ENCODE measurements at regions of chr3 and their contacts with region 1.

Region 1: GRCh38 chr3:5583920-5584319 is 396.4 kb downstream of the EDEM1 start:
- DNase-seq: no peak
- H3K4me3 ChIP-seq: no peak overlapping the region
- H3K4me3 Mint-ChIP-seq: no peak overlapping the region
- H3K27ac Mint-ChIP-seq: no peak overlapping the region
- H3K4me1 ChIP-seq: no peaks in the 10 kb centered on the region
- H3K4me1 Mint-ChIP-seq: no peaks in the 10 kb centered on the region
- H3K27me3 ChIP-seq: no peaks in the 10 kb centered on the region; the same call in 1 of the 2 replicates
- H3K27me3 Mint-ChIP-seq: no peaks in the 10 kb centered on the region
- CTCF ChIP-seq: no peak

Region 2: DNA sequence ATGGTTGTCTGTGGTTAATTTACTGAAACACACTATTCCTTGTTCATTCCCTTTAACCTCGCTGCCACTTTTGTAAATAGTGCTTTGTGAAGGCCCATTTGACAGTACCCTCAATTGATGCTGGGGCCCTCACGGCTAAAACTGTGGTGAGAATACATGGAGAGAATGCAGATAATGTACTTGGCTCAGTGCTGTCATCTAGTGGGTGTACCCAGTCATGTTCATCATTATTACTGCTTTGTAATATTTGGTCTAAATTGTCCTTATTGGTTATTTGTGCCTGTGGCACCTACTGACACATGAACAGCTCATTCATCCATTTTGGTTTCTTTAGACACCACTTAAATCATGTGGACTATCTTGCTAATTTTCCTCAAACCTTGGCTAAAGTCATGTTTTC is 147.2 kb after region 1 on chr3:
- CTCF ChIA-PET with region 1: no interaction called
- POLR2A ChIA-PET with region 1: no interaction called
- intact Hi-C with region 1: loop called (anchors 10 kb)
- DNase-seq: peak in 1 of 2 experiments; percentile 3
- H3K4me3 ChIP-seq: no peak overlapping the region
- H3K4me3 Mint-ChIP-seq: no peak overlapping the region
- H3K27ac Mint-ChIP-seq: no peak overlapping the region
- H3K4me1 ChIP-seq: no peaks in the 10 kb centered on the region
- H3K4me1 Mint-ChIP-seq: no peaks in the 10 kb centered on the region
- H3K27me3 ChIP-seq: no peaks in the 10 kb centered on the region
- H3K27me3 Mint-ChIP-seq: no peaks in the 10 kb centered on the region
- CTCF ChIP-seq: no peak

Measured in Caco-2 (cell line).